ENCODE measurements at regions of chr2 and their contacts with region 1.

Region 1: GRCh38 chr2:157628477-157629415 is at the start of gene ACVR1C:
- DNase-seq: peak; percentile 55 to 78 (median 70)
- ATAC-seq: peak; percentile 86
- H3K4me3 ChIP-seq: peak within 1 kb of the TSS; percentile 85
- H3K4me3 Mint-ChIP-seq: peak within 1 kb of the TSS; percentile 91 to 99 (median 96)
- H3K27ac ChIP-seq: peak within 1 kb of the TSS; percentile 79
- H3K27ac Mint-ChIP-seq: peak within 1 kb of the TSS; percentile 78 to 94 (median 89)
- H3K4me1 ChIP-seq: peaks cover 4 to 24% of the 10 kb centered on the region in 2 donors
- H3K4me1 Mint-ChIP-seq: peaks cover 18 to 44% (median 39%) of the 10 kb centered on the region in 7 donors
- H3K27me3 ChIP-seq: no peaks in the 10 kb centered on the region
- H3K27me3 Mint-ChIP-seq: peaks cover 0 to 36% (median 0%) of the 10 kb centered on the region in 5 donors
- total RNA-seq, gene ACVR1C: 0.73 to 11.4 (median 8.9) TPM

Region 2: GRCh38 chr2:156341452-156342253 is 1287.1 kb before region 1 on chr2:
- CTCF ChIA-PET with region 1: no interaction called
- POLR2A ChIA-PET with region 1: interaction called, 3 read pairs
- intact Hi-C with region 1: loop called (anchors 5 kb)
- DNase-seq: peak; percentile 66 to 91 (median 85)
- ATAC-seq: peak; percentile 81
- H3K4me3 ChIP-seq: peak overlapping the region; percentile 67
- H3K4me3 Mint-ChIP-seq: peak overlapping the region; percentile 91 to 98 (median 96)
- H3K27ac ChIP-seq: peak overlapping the region; percentile 100
- H3K27ac Mint-ChIP-seq: peak overlapping the region; percentile 94 to 100 (median 99)
- H3K4me1 ChIP-seq: peaks cover 18 to 20% of the 10 kb centered on the region in 2 donors
- H3K4me1 Mint-ChIP-seq: peaks cover 6 to 51% (median 45%) of the 10 kb centered on the region in 7 donors
- H3K27me3 ChIP-seq: no peaks in the 10 kb centered on the region
- H3K27me3 Mint-ChIP-seq: no peaks in the 10 kb centered on the region

Region 3: DNA sequence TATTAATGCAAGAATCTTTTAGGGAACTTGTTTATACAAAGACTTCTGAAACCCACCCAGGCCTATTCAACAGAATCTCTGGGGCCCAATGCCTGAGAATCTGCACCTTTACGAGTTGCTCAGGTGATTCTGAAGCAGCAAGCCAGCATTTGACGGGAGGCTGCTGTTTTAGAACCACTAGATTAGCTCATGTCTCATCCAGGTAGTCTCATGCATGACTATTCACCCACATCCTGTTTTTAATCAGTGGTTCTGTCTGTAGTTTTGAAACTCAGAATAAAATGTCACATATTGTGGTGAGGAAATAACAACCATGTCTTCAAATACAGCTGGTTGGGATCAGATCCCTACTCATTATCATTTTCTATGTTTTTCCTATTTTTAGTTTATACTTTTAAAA is 224.4 kb before region 1 on chr2:
- CTCF ChIA-PET with region 1: no interaction called
- POLR2A ChIA-PET with region 1: no interaction called
- intact Hi-C with region 1: loop called in 1 of 2 experiments (anchors 5 kb)
- DNase-seq: peak in 8 of 9 donors; percentile 44 to 92 (median 88)
- ATAC-seq: peak; percentile 98
- H3K4me3 ChIP-seq: peak overlapping the region; percentile 7
- H3K4me3 Mint-ChIP-seq: peak overlapping the region; percentile 8 to 83 (median 74)
- H3K27ac ChIP-seq: peak overlapping the region; percentile 75
- H3K27ac Mint-ChIP-seq: peak overlapping the region; percentile 91 to 100 (median 99)
- H3K4me1 ChIP-seq: peaks cover 33 to 55% of the 10 kb centered on the region in 2 donors
- H3K4me1 Mint-ChIP-seq: peaks cover 31 to 82% (median 77%) of the 10 kb centered on the region in 7 donors
- H3K27me3 ChIP-seq: no peaks in the 10 kb centered on the region
- H3K27me3 Mint-ChIP-seq: no peaks in the 10 kb centered on the region

Region 4: GRCh38 chr2:157497638-157498314 is 131.0 kb before region 1 on chr2:
- CTCF ChIA-PET with region 1: interaction called, 4 read pairs
- POLR2A ChIA-PET with region 1: interaction called, 3 read pairs
- intact Hi-C with region 1: loop called (anchors 1 to 10 kb)
- DNase-seq: peak in 7 of 9 donors; percentile 13 to 61 (median 49)
- ATAC-seq: peak; percentile 94
- H3K4me3 ChIP-seq: no peak overlapping the region
- H3K4me3 Mint-ChIP-seq: no peak overlapping the region
- H3K27ac ChIP-seq: no peak overlapping the region
- H3K27ac Mint-ChIP-seq: peak overlapping the region in 1 of 9 donors; percentile 29
- H3K4me1 ChIP-seq: peaks cover 0 to 8% of the 10 kb centered on the region in 2 donors
- H3K4me1 Mint-ChIP-seq: peaks cover 8 to 40% (median 37%) of the 10 kb centered on the region in 7 donors
- H3K27me3 ChIP-seq: no peaks in the 10 kb centered on the region
- H3K27me3 Mint-ChIP-seq: no peaks in the 10 kb centered on the region

Region 5: GRCh38 chr2:157611110-157611509 is 17.6 kb before region 1 on chr2:
- CTCF ChIA-PET with region 1: no interaction called
- POLR2A ChIA-PET with region 1: no interaction called
- intact Hi-C with region 1: loop called in 1 of 2 experiments (anchors 2 kb)
- DNase-seq: no peak
- ATAC-seq: no peak
- H3K4me3 ChIP-seq: no peak overlapping the region
- H3K4me3 Mint-ChIP-seq: no peak overlapping the region
- H3K27ac ChIP-seq: no peak overlapping the region
- H3K27ac Mint-ChIP-seq: peak overlapping the region in 1 of 9 donors; percentile 3
- H3K4me1 ChIP-seq: no peaks in the 10 kb centered on the region
- H3K4me1 Mint-ChIP-seq: peaks cover 0 to 10% (median 5%) of the 10 kb centered on the region in 7 donors
- H3K27me3 ChIP-seq: peaks cover 0 to 3% of the 10 kb centered on the region in 2 donors
- H3K27me3 Mint-ChIP-seq: peaks cover 0 to 29% (median 2%) of the 10 kb centered on the region in 5 donors

Region 6: DNA sequence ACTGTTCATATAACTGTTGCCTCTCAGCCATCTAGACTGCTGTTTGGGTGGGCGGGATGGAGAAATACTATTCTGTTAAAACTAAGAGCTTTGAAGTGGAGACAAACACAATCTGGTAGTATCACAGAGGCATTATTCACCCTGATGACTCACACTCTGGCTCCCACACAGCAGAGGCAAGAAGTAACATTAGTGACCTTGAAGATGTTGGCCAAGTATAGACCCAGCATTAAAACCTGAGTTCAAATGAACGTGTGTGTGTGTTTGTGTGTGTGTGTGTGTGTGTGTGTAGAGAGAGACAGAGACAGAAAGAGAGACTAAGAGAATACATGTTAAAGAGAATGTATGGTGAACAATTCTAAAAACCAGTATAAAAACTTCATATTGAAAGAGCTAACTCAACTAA is 269.8 kb after region 1 on chr2:
- CTCF ChIA-PET with region 1: no interaction called
- POLR2A ChIA-PET with region 1: interaction called, 4 read pairs
- intact Hi-C with region 1: loop called (anchors 2 to 5 kb)
- DNase-seq: peak in 2 of 9 donors; percentile 54 to 60
- ATAC-seq: peak; percentile 63
- H3K4me3 ChIP-seq: peak overlapping the region; percentile 26
- H3K4me3 Mint-ChIP-seq: peak overlapping the region; percentile 74 to 93 (median 86)
- H3K27ac ChIP-seq: peak overlapping the region; percentile 78
- H3K27ac Mint-ChIP-seq: peak overlapping the region; percentile 94 to 100 (median 98)
- H3K4me1 ChIP-seq: peaks cover 44 to 59% of the 10 kb centered on the region in 2 donors
- H3K4me1 Mint-ChIP-seq: peaks cover 48 to 80% (median 72%) of the 10 kb centered on the region in 7 donors
- H3K27me3 ChIP-seq: no peaks in the 10 kb centered on the region
- H3K27me3 Mint-ChIP-seq: no peaks in the 10 kb centered on the region

Region 7: DNA sequence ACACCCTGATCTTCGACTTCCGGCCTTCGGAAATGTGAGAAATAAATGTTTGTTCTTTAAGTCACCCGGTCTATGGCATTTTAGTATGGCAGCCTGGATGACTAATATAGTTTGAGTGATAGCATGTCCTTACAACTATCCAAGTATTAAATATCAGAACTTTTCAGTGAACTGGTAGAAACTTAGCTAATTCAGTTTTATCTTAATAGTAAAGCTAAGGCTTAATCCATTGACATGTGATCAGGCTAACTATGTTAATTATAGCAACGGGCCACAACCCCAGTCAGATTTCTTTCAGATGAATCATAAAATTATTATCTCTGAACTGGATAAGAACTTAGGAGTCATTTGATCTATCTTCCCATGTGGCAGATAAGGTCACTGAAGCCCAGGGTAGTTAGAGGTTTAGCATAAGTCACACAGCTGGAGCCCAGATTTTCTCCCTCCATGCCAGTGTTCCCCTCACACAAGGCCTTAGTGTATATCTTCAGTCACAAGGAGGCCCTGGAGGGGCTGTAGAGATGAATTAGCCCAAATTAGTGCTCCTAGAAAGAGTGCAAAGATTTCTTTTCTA is 432.2 kb after region 1 on chr2:
- CTCF ChIA-PET with region 1: no interaction called
- POLR2A ChIA-PET with region 1: no interaction called
- intact Hi-C with region 1: no loop called
- DNase-seq: no peak
- ATAC-seq: no peak
- H3K4me3 ChIP-seq: no peak overlapping the region
- H3K4me3 Mint-ChIP-seq: no peak overlapping the region
- H3K27ac ChIP-seq: no peak overlapping the region
- H3K27ac Mint-ChIP-seq: no peak overlapping the region
- H3K4me1 ChIP-seq: no peaks in the 10 kb centered on the region
- H3K4me1 Mint-ChIP-seq: peaks cover 0 to 2% (median 0%) of the 10 kb centered on the region in 7 donors
- H3K27me3 ChIP-seq: no peaks in the 10 kb centered on the region
- H3K27me3 Mint-ChIP-seq: peaks cover 0 to 4% (median 2%) of the 10 kb centered on the region in 5 donors